CD14-positive monocyte (primary cell): ENCODE measurements at regions of chr1 and their contacts with region 1.

Region 1: DNA sequence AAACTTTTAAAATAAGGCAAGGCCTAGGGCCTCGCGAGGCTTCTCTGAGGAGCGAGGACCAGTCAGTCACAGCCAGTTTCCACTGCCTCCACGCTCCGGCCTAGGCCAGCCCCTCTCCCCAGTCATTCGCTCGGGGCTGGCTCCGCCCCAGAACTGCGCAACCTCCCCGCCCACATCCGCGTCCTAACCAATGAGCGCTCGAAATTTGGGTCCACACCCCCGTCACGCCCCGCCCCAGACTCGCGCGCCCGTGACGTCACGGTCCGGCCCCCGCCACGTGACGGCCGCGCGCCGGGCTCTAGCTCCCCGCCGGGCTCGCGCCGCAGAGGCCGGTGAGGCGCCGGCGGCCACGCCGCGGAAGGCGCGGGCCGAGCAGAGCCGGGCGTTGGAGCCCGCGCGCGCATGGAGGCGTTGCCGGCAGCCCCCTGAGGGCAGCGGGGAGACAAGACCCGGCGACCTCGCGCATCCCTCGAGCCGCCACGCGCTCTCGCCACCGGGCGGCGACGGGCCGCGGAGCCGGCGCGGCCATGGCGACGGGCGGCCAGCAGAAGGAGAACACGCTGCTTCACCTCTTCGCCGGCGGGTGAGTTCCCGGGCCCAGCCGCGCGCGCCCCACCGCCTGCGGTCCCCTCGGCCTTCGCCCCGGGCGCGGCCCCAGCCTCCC is at the start of gene SLC25A33:
- DNase-seq: peak; percentile 94 to 98 (median 97)
- H3K4me3 ChIP-seq: peak within 1 kb of the TSS; percentile 48 to 87 (median 78)
- H3K4me3 Mint-ChIP-seq: peak within 1 kb of the TSS; percentile 90 to 93
- H3K27ac ChIP-seq: peak within 1 kb of the TSS; percentile 42 to 75
- H3K27ac Mint-ChIP-seq: peak within 1 kb of the TSS; percentile 78 to 91 (median 87)
- H3K4me1 ChIP-seq: peaks cover 26 to 35% of the 10 kb centered on the region in 2 donors
- H3K4me1 Mint-ChIP-seq: peaks cover 26% of the 10 kb centered on the region
- H3K27me3 ChIP-seq: no peaks in the 10 kb centered on the region
- H3K27me3 Mint-ChIP-seq: peaks cover 0 to 5% (median 0%) of the 10 kb centered on the region in 3 donors
- CTCF ChIP-seq: no peak
- polyA plus RNA-seq, gene SLC25A33: 2.3 to 6.4 (median 4.4) TPM

Region 2: GRCh38 chr1:9428601-9429341 is 110.5 kb before region 1 on chr1:
- intact Hi-C with region 1: loop called in 1 of 2 experiments (anchors 5 kb)
- DNase-seq: peak; percentile 99
- H3K4me3 ChIP-seq: peak overlapping the region; percentile 81 to 83 (median 83)
- H3K4me3 Mint-ChIP-seq: peak overlapping the region; percentile 98 to 99
- H3K27ac ChIP-seq: peak overlapping the region; percentile 37 to 67
- H3K27ac Mint-ChIP-seq: peak overlapping the region; percentile 89 to 95 (median 93)
- H3K4me1 ChIP-seq: peaks cover 27 to 34% of the 10 kb centered on the region in 2 donors
- H3K4me1 Mint-ChIP-seq: peaks cover 32% of the 10 kb centered on the region
- H3K27me3 ChIP-seq: peaks cover 0 to 9% of the 10 kb centered on the region in 2 donors
- H3K27me3 Mint-ChIP-seq: peaks cover 17 to 25% (median 24%) of the 10 kb centered on the region in 3 donors
- CTCF ChIP-seq: no peak

Region 3: GRCh38 chr1:9588551-9589143 is 49.4 kb after region 1 on chr1 and contains the start of gene TMEM201:
- intact Hi-C with region 1: no loop called
- DNase-seq: peak; percentile 90 to 92 (median 91)
- H3K4me3 ChIP-seq: peak within 1 kb of the TSS; percentile 43 to 80 (median 46)
- H3K4me3 Mint-ChIP-seq: peak within 1 kb of the TSS; percentile 78 to 91
- H3K27ac ChIP-seq: no peak within 1 kb of the TSS
- H3K27ac Mint-ChIP-seq: peak within 1 kb of the TSS in 6 of 7 donors; percentile 38 to 82 (median 52)
- H3K4me1 ChIP-seq: peaks cover 46 to 51% of the 10 kb centered on the region in 2 donors
- H3K4me1 Mint-ChIP-seq: peaks cover 49% of the 10 kb centered on the region
- H3K27me3 ChIP-seq: peaks cover 0 to 4% of the 10 kb centered on the region in 2 donors
- H3K27me3 Mint-ChIP-seq: peaks cover 5% of the 10 kb centered on the region in 3 donors
- CTCF ChIP-seq: peak; percentile 80
- polyA plus RNA-seq, gene TMEM201: 0.37 to 3.7 (median 0.37) TPM